Left ventricle myocardium superior (tissue), 1 donor: ENCODE measurements at regions of chr2 and their contacts with region 1.

Region 1: GRCh38 chr2:168773719-168774521 is 28.5 kb upstream of the NOSTRIN start:
- DNase-seq: peak; percentile 63
- ATAC-seq: peak; percentile 57

Region 2: DNA sequence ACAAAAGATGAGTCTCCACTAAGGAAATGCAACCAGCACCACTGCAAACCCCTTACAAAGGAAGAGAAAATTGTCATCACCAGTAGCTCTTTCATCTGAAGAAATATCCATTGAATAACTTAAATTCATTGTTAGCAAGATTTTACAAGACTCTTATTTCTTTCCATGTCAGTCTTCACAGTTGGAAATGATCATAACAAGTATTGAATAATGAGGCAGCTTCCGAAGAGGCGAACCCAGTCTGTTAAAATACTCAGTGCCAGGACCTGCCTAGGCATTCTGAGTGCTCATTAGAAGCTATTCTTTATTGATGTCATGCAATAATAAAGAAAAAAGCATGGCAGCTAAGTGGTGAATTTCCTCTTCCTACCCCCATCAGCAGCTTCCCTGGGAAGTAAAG is 62.0 kb after region 1 on chr2:
- intact Hi-C with region 1: loop called (anchors 10 kb)
- DNase-seq: no peak
- ATAC-seq: no peak

Region 3: GRCh38 chr2:168920504-168921157 is 146.7 kb after region 1 on chr2:
- intact Hi-C with region 1: loop called (anchors 5 kb)
- DNase-seq: no peak
- ATAC-seq: no peak